ENCODE measurements at regions of chr9 and their contacts with region 1.

Region 1: GRCh38 chr9:75071530-75072124 is 16.3 kb downstream of the NMRK1 start:
- DNase-seq: no peak
- ATAC-seq: peak; percentile 63
- H3K4me3 ChIP-seq: no peak overlapping the region
- H3K27ac ChIP-seq: no peak overlapping the region
- H3K4me1 ChIP-seq: no peaks in the 10 kb centered on the region; the same call in 1 of the 2 replicates
- H3K27me3 ChIP-seq: no peaks in the 10 kb centered on the region
- CTCF ChIP-seq: no peak
- EP300 ChIP-seq: no peak
- POLR2A ChIP-seq: no peak
- RAD21 ChIP-seq: no peak

Region 2: DNA sequence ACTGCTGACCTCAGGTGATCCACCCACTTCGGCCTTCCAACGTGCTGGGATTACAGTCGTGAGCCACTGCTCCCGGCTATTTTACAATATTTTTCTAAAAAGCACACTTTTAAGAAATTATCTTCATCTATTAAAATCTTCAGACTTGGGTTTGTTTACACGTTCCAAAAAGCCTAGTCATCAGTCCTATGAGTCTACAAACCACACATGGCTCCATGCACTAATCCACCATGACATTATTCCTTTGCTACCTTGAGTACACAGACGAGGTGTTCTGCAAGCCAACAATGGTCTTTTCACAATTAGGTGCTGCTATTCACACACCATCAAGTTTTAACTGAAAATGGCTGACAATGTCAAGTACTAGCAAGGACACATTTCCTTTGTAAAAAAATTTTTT is 224.9 kb before region 1 on chr9:
- CTCF ChIA-PET with region 1: no interaction called
- POLR2A ChIA-PET with region 1: no interaction called
- RAD21 ChIA-PET with region 1: no interaction called
- SMC1A ChIA-PET with region 1: no interaction called
- in situ Hi-C with region 1: no loop called
- intact Hi-C with region 1: loop called (anchors 5 kb)
- DNase-seq: no peak
- ATAC-seq: no peak
- H3K4me3 ChIP-seq: no peak overlapping the region
- H3K27ac ChIP-seq: no peak overlapping the region
- H3K4me1 ChIP-seq: no peaks in the 10 kb centered on the region
- H3K27me3 ChIP-seq: no peaks in the 10 kb centered on the region
- CTCF ChIP-seq: no peak
- EP300 ChIP-seq: no peak
- POLR2A ChIP-seq: no peak
- RAD21 ChIP-seq: no peak

Region 3: GRCh38 chr9:74940600-74940999 is 131.0 kb before region 1 on chr9:
- CTCF ChIA-PET with region 1: interaction called, 3 read pairs
- POLR2A ChIA-PET with region 1: no interaction called
- RAD21 ChIA-PET with region 1: no interaction called
- SMC1A ChIA-PET with region 1: no interaction called
- in situ Hi-C with region 1: no loop called
- intact Hi-C with region 1: loop called (anchors 2 kb)
- DNase-seq: no peak
- ATAC-seq: peak; percentile 84
- H3K4me3 ChIP-seq: no peak overlapping the region
- H3K27ac ChIP-seq: no peak overlapping the region
- H3K4me1 ChIP-seq: no peaks in the 10 kb centered on the region
- H3K27me3 ChIP-seq: no peaks in the 10 kb centered on the region
- CTCF ChIP-seq: peak in 2 of 3 experiments; percentile 6 to 34; a peak in 1 of 6 replicates
- EP300 ChIP-seq: no peak
- POLR2A ChIP-seq: no peak
- RAD21 ChIP-seq: no peak

Region 4: GRCh38 chr9:75001719-75002422 is 69.8 kb before region 1 on chr9:
- CTCF ChIA-PET with region 1: interaction called, 11 read pairs
- POLR2A ChIA-PET with region 1: no interaction called
- RAD21 ChIA-PET with region 1: no interaction called
- SMC1A ChIA-PET with region 1: interaction called, 3 read pairs
- in situ Hi-C with region 1: no loop called
- intact Hi-C with region 1: no loop called
- DNase-seq: peak; percentile 36
- ATAC-seq: peak; percentile 96
- H3K4me3 ChIP-seq: no peak overlapping the region
- H3K27ac ChIP-seq: no peak overlapping the region
- H3K4me1 ChIP-seq: peaks cover 8% of the 10 kb centered on the region
- H3K27me3 ChIP-seq: no peaks in the 10 kb centered on the region
- CTCF ChIP-seq: peak; percentile 63 to 81 (median 69)
- EP300 ChIP-seq: no peak
- POLR2A ChIP-seq: no peak
- RAD21 ChIP-seq: peak; percentile 87

Region 5: GRCh38 chr9:75027187-75028107 is 44.2 kb before region 1 on chr9:
- CTCF ChIA-PET with region 1: interaction called, 13 read pairs
- POLR2A ChIA-PET with region 1: no interaction called
- RAD21 ChIA-PET with region 1: interaction called, 20 read pairs
- SMC1A ChIA-PET with region 1: interaction called, 16 read pairs
- in situ Hi-C with region 1: no loop called
- intact Hi-C with region 1: no loop called
- DNase-seq: no peak
- ATAC-seq: peak; percentile 74
- H3K4me3 ChIP-seq: peak overlapping the region; percentile 76
- H3K27ac ChIP-seq: peak overlapping the region; percentile 81
- H3K4me1 ChIP-seq: no peaks in the 10 kb centered on the region; the same call in 1 of the 2 replicates
- H3K27me3 ChIP-seq: no peaks in the 10 kb centered on the region
- CTCF ChIP-seq: peak in 2 of 3 experiments; percentile 3 to 37; a peak in 2 of 6 replicates
- EP300 ChIP-seq: no peak
- POLR2A ChIP-seq: no peak
- RAD21 ChIP-seq: no peak

Region 6: GRCh38 chr9:75088260-75088905 is 16.8 kb after region 1 on chr9 and contains the start of gene OSTF1:
- CTCF ChIA-PET with region 1: interaction called, 12 read pairs
- POLR2A ChIA-PET with region 1: no interaction called
- RAD21 ChIA-PET with region 1: interaction called, 3 read pairs
- SMC1A ChIA-PET with region 1: interaction called, 6 read pairs
- in situ Hi-C with region 1: no loop called
- intact Hi-C with region 1: no loop called
- DNase-seq: peak; percentile 64
- ATAC-seq: peak; percentile 89
- H3K4me3 ChIP-seq: peak within 1 kb of the TSS; percentile 93
- H3K27ac ChIP-seq: peak within 1 kb of the TSS; percentile 93
- H3K4me1 ChIP-seq: peaks cover 13% of the 10 kb centered on the region; the same call in 1 of the 2 replicates
- H3K27me3 ChIP-seq: no peaks in the 10 kb centered on the region
- CTCF ChIP-seq: no peak
- EP300 ChIP-seq: no peak
- POLR2A ChIP-seq: peak; percentile 95
- RAD21 ChIP-seq: no peak
- polyA plus RNA-seq, gene OSTF1: 36.2 to 45.3 TPM

Measured in GM12878 (cell line).